A673 (cell line): ENCODE measurements at regions of chr11 and their contacts with region 1.

Region 1: GRCh38 chr11:118171269-118172062 is 5.0 kb downstream of the SCN2B start:
- DNase-seq: peak; percentile 82
- H3K4me3 ChIP-seq: no peak overlapping the region
- H3K27ac ChIP-seq: no peak overlapping the region
- H3K4me1 ChIP-seq: no peaks in the 10 kb centered on the region
- H3K27me3 ChIP-seq: peaks cover 4% of the 10 kb centered on the region
- CTCF ChIP-seq: peak; percentile 98

Region 2: GRCh38 chr11:117989351-117990102 is 181.9 kb before region 1 on chr11:
- CTCF ChIA-PET with region 1: interaction called, 10 read pairs
- POLR2A ChIA-PET with region 1: no interaction called
- intact Hi-C with region 1: no loop called
- DNase-seq: no peak
- H3K4me3 ChIP-seq: no peak overlapping the region
- H3K27ac ChIP-seq: no peak overlapping the region
- H3K4me1 ChIP-seq: peaks cover 4% of the 10 kb centered on the region
- H3K27me3 ChIP-seq: peaks cover 35% of the 10 kb centered on the region
- CTCF ChIP-seq: no peak

Region 3: GRCh38 chr11:118152552-118153471 is 18.7 kb before region 1 on chr11 and contains the start of gene SCN4B:
- CTCF ChIA-PET with region 1: interaction called, 14 read pairs
- POLR2A ChIA-PET with region 1: no interaction called
- intact Hi-C with region 1: no loop called
- DNase-seq: peak; percentile 85
- H3K4me3 ChIP-seq: peak within 1 kb of the TSS; percentile 62
- H3K27ac ChIP-seq: no peak within 1 kb of the TSS
- H3K4me1 ChIP-seq: peaks cover 42% of the 10 kb centered on the region
- H3K27me3 ChIP-seq: peaks cover 43% of the 10 kb centered on the region
- CTCF ChIP-seq: no peak
- total RNA-seq, gene SCN4B: 0.74 and 1.8 TPM in 2 replicates

Region 4: GRCh38 chr11:118277306-118277705 is 105.8 kb after region 1 on chr11:
- CTCF ChIA-PET with region 1: no interaction called
- POLR2A ChIA-PET with region 1: no interaction called
- intact Hi-C with region 1: no loop called
- DNase-seq: no peak
- H3K4me3 ChIP-seq: no peak overlapping the region
- H3K27ac ChIP-seq: no peak overlapping the region
- H3K4me1 ChIP-seq: no peaks in the 10 kb centered on the region
- H3K27me3 ChIP-seq: peaks cover 55% of the 10 kb centered on the region
- CTCF ChIP-seq: no peak